CD4-positive, alpha-beta memory T cell (primary cell): ENCODE measurements at regions of chr20 and their contacts with region 1.

Region 1: DNA sequence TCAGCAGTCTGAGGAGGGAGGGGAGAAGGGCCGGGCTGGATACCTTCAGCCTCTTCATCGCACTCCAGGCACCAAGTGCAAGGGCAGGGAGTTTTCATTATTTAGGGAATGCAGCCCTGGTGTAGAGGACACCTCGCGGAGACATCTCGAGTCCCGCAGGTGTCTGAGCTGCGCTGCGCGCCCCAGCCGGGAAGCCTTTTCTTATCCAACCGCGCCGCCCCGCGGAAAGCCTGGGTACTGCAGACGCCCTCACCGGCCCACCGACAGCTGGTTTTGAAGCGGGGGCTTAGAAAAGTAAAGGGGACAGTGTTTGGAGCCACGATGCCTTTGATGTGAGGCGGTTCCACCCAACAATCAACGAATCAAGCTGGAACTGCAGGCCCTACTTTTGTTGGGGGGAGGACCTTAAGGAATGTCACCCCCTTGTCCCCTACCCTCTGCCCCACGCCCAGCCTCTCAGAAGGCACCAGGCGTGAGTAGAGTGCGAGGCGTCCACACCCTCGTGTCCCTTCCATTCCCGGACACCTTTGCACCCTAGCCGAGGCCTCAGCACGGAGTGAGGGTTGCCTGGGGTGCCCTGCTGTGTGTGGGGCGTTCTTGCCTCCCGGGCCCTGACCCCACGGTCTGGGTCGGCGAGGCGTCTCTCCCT is 8.6 kb downstream of the NKX2-2 start:
- DNase-seq: peak; percentile 66 to 77 (median 70)
- H3K4me3 ChIP-seq: peak overlapping the region in 1 of 2 donors; percentile 55
- H3K4me3 Mint-ChIP-seq: peak overlapping the region; percentile 71 to 80 (median 74)
- H3K27ac ChIP-seq: no peak overlapping the region
- H3K27ac Mint-ChIP-seq: peak overlapping the region in 2 of 7 donors; percentile 41 to 81
- H3K4me1 ChIP-seq: peaks cover 22% of the 10 kb centered on the region
- H3K4me1 Mint-ChIP-seq: peaks cover 15 to 43% (median 35%) of the 10 kb centered on the region in 4 donors
- H3K27me3 ChIP-seq: peaks cover 39% of the 10 kb centered on the region
- H3K27me3 Mint-ChIP-seq: peaks cover 44 to 52% of the 10 kb centered on the region in 2 donors

Region 2: GRCh38 chr20:20083807-20084206 is 1421.5 kb before region 1 on chr20:
- CTCF ChIA-PET with region 1: no interaction called
- POLR2A ChIA-PET with region 1: no interaction called
- intact Hi-C with region 1: loop called (anchors 2 kb)
- DNase-seq: peak in 4 of 5 donors; percentile 22 to 47 (median 44)
- H3K4me3 ChIP-seq: no peak overlapping the region
- H3K4me3 Mint-ChIP-seq: peak overlapping the region in 6 of 8 donors; percentile 75 to 83 (median 78)
- H3K27ac ChIP-seq: no peak overlapping the region
- H3K27ac Mint-ChIP-seq: peak overlapping the region in 2 of 7 donors; percentile 84 to 86
- H3K4me1 ChIP-seq: no peaks in the 10 kb centered on the region
- H3K4me1 Mint-ChIP-seq: peaks cover 0 to 9% (median 7%) of the 10 kb centered on the region in 4 donors
- H3K27me3 ChIP-seq: no peaks in the 10 kb centered on the region
- H3K27me3 Mint-ChIP-seq: peaks cover 6 to 17% of the 10 kb centered on the region in 2 donors

Region 3: GRCh38 chr20:21099751-21100577 is 405.3 kb before region 1 on chr20:
- CTCF ChIA-PET with region 1: no interaction called
- POLR2A ChIA-PET with region 1: interaction called, 3 read pairs
- intact Hi-C with region 1: loop called (anchors 5 kb)
- DNase-seq: peak in 4 of 5 donors; percentile 44 to 62 (median 48)
- H3K4me3 ChIP-seq: peak overlapping the region; percentile 54 to 62
- H3K4me3 Mint-ChIP-seq: peak overlapping the region; percentile 80 to 98 (median 88)
- H3K27ac ChIP-seq: no peak overlapping the region
- H3K27ac Mint-ChIP-seq: peak overlapping the region; percentile 42 to 93 (median 74)
- H3K4me1 ChIP-seq: peaks cover 44% of the 10 kb centered on the region
- H3K4me1 Mint-ChIP-seq: peaks cover 16 to 59% (median 42%) of the 10 kb centered on the region in 4 donors
- H3K27me3 ChIP-seq: peaks cover 65% of the 10 kb centered on the region
- H3K27me3 Mint-ChIP-seq: peaks cover 61% of the 10 kb centered on the region in 2 donors

Region 4: GRCh38 chr20:21235484-21236445 is 269.5 kb before region 1 on chr20:
- CTCF ChIA-PET with region 1: interaction called, 337 read pairs
- POLR2A ChIA-PET with region 1: interaction called, 4 read pairs
- intact Hi-C with region 1: loop called (anchors 1 kb)
- DNase-seq: peak; percentile 57 to 66 (median 62)
- H3K4me3 ChIP-seq: no peak overlapping the region
- H3K4me3 Mint-ChIP-seq: no peak overlapping the region
- H3K27ac ChIP-seq: no peak overlapping the region
- H3K27ac Mint-ChIP-seq: no peak overlapping the region
- H3K4me1 ChIP-seq: peaks cover 4% of the 10 kb centered on the region
- H3K4me1 Mint-ChIP-seq: peaks cover 2 to 4% (median 3%) of the 10 kb centered on the region in 4 donors
- H3K27me3 ChIP-seq: no peaks in the 10 kb centered on the region
- H3K27me3 Mint-ChIP-seq: no peaks in the 10 kb centered on the region

Region 5: DNA sequence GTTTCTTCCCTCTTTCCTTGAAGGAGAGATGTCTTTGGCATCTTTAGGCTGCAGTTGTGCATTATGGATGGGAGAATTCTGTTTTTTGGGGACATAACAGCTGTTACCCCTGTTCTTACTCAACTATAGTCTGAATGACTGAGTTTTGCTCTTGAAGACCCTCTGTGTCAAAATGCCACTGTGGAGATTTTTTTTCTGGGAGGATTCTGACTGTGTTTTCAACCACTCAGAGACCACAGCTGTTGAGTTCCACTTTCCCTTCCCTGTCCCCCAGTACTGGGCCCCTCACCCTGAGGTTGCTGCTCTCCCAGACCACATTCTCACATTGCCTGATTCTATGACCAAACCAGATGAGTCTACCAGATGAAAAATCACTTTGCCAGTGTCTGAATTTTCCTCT is 39.5 kb before region 1 on chr20:
- CTCF ChIA-PET with region 1: no interaction called
- POLR2A ChIA-PET with region 1: no interaction called
- intact Hi-C with region 1: no loop called
- DNase-seq: no peak
- H3K4me3 ChIP-seq: no peak overlapping the region
- H3K4me3 Mint-ChIP-seq: no peak overlapping the region
- H3K27ac ChIP-seq: no peak overlapping the region
- H3K27ac Mint-ChIP-seq: no peak overlapping the region
- H3K4me1 ChIP-seq: no peaks in the 10 kb centered on the region
- H3K4me1 Mint-ChIP-seq: no peaks in the 10 kb centered on the region
- H3K27me3 ChIP-seq: no peaks in the 10 kb centered on the region
- H3K27me3 Mint-ChIP-seq: peaks cover 5 to 16% of the 10 kb centered on the region in 2 donors

Region 6: DNA sequence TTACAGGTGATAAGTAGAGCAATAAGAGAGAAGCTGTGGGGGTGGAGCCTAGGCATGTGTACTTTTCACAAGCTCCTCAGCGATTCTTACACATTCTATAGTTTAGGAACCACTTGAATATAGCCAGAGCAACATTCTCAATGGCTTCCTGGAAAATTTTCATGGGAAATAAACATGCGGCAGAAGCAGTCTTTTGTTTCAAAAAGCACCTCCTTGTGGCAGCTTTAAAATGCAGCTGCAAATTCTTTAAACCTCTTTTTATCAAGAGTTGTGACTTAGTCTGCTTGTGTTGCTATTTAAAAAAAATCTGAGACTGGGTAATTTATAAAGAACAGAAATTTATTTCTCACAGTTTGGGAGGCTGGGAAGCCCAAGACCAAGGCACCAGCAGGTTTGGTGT is 15.2 kb before region 1 on chr20:
- CTCF ChIA-PET with region 1: interaction called, 17 read pairs
- POLR2A ChIA-PET with region 1: no interaction called
- intact Hi-C with region 1: no loop called
- DNase-seq: no peak
- H3K4me3 ChIP-seq: no peak overlapping the region
- H3K4me3 Mint-ChIP-seq: no peak overlapping the region
- H3K27ac ChIP-seq: no peak overlapping the region
- H3K27ac Mint-ChIP-seq: no peak overlapping the region
- H3K4me1 ChIP-seq: no peaks in the 10 kb centered on the region
- H3K4me1 Mint-ChIP-seq: no peaks in the 10 kb centered on the region
- H3K27me3 ChIP-seq: peaks cover 4% of the 10 kb centered on the region
- H3K27me3 Mint-ChIP-seq: peaks cover 19 to 34% of the 10 kb centered on the region in 2 donors

Region 7: DNA sequence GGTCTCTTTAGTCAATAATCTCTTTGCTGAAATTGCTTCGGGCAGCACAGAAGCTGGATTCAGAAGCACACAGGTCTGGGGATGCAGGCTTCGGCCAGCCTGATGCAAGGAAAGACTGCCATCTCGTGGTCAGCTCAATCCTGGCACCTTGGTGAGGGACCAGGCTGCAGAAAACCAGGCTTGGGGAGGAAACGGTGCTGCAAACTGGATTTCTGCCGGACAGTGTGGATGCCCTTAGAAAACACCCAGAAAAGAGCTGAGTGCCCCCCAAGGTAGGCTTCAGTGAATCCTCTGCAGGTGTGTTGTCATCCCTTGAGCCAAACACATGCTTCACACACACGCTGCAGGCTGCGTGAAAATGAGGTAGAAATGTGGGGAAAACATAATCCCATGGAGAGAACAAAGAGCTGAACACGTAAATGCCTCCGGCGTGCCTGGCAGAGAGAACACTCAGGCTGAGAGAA is 110.4 kb after region 1 on chr20:
- CTCF ChIA-PET with region 1: interaction called, 9 read pairs
- POLR2A ChIA-PET with region 1: no interaction called
- intact Hi-C with region 1: loop called (anchors 5 kb)
- DNase-seq: peak; percentile 19 to 42 (median 19)
- H3K4me3 ChIP-seq: no peak overlapping the region
- H3K4me3 Mint-ChIP-seq: no peak overlapping the region
- H3K27ac ChIP-seq: no peak overlapping the region
- H3K27ac Mint-ChIP-seq: no peak overlapping the region
- H3K4me1 ChIP-seq: no peaks in the 10 kb centered on the region
- H3K4me1 Mint-ChIP-seq: no peaks in the 10 kb centered on the region
- H3K27me3 ChIP-seq: no peaks in the 10 kb centered on the region
- H3K27me3 Mint-ChIP-seq: peaks cover 0 to 14% of the 10 kb centered on the region in 2 donors